H1 (cell line): ENCODE measurements at regions of chr7 and their contacts with region 1.

Region 1: GRCh38 chr7:45136106-45137060 is 21.2 kb upstream of the RAMP3 start:
- DNase-seq: no peak
- H3K4me3 ChIP-seq: no peak overlapping the region
- H3K27ac ChIP-seq: no peak overlapping the region
- H3K4me1 ChIP-seq: no peaks in the 10 kb centered on the region
- H3K27me3 ChIP-seq: no peaks in the 10 kb centered on the region
- CTCF ChIP-seq: peak in 2 of 3 experiments; percentile 83 to 93; a peak in 3 of 4 replicates
- EP300 ChIP-seq: no peak
- POLR2A ChIP-seq: no peak
- RAD21 ChIP-seq: peak; percentile 94

Region 2: GRCh38 chr7:44962483-44963251 is 173.7 kb before region 1 on chr7:
- CTCF ChIA-PET with region 1: interaction called, 21 read pairs
- POLR2A ChIA-PET with region 1: no interaction called
- DNase-seq: peak in 1 of 2 experiments; percentile 67
- H3K4me3 ChIP-seq: peak overlapping the region; percentile 20 to 58 (median 38)
- H3K27ac ChIP-seq: no peak overlapping the region
- H3K4me1 ChIP-seq: peaks cover 0 to 11% (median 4%) of the 10 kb centered on the region in 4 experiments; a peak in 4 of 7 replicates
- H3K27me3 ChIP-seq: peaks cover 10 to 40% (median 23%) of the 10 kb centered on the region in 4 experiments; a peak in 6 of 7 replicates
- CTCF ChIP-seq: peak in 1 of 3 experiments; percentile 12; a peak in 1 of 4 replicates
- EP300 ChIP-seq: no peak
- POLR2A ChIP-seq: 0 out of 3 replicates have a peak, but pooled peaks of 1 of the 2 experiments have one; percentile 36
- RAD21 ChIP-seq: peak; percentile 22 to 31; a peak in 2 of 4 replicates

Region 3: DNA sequence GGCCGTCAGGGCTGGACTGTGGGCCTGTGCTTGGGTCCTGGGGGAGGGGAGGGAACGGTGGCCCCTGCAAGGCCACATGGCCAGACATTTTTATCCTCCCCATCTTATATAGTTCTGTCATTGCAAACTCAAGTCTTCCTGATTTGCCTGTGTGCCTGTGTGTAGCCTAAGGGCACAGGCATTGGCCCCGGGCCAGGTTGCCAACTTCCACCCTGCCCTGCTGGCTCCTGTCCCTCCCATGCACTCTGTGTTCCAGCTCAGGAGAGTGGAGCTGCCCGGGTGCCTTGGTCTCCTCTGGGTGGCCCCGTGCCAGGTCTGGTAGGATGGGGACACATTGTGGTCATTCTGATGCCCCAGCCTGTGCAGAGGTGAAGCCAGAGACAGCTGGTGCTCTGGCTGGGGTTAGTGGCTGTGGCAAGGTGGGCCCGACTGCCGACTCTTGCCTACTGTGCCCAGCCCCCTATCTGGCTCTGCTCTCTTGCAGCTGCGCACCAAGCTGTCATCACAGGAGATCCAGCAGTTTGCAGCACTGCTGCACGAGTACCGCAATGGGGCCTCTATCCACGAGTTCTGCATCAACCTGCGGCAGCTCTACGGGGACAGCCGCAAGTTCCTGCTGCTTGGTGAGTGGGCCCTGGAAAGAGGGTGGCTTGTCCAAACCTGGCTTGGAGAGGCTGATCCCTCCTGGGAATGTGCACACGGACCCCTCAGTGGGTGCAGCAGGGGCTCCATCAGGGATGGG is 62.4 kb before region 1 on chr7:
- CTCF ChIA-PET with region 1: interaction called, 11 read pairs
- POLR2A ChIA-PET with region 1: no interaction called
- DNase-seq: no peak
- H3K4me3 ChIP-seq: no peak overlapping the region
- H3K27ac ChIP-seq: no peak overlapping the region
- H3K4me1 ChIP-seq: no peaks in the 10 kb centered on the region; a peak in 1 of 7 replicates
- H3K27me3 ChIP-seq: no peaks in the 10 kb centered on the region
- CTCF ChIP-seq: no peak
- EP300 ChIP-seq: no peak
- POLR2A ChIP-seq: no peak
- RAD21 ChIP-seq: no peak

Region 4: DNA sequence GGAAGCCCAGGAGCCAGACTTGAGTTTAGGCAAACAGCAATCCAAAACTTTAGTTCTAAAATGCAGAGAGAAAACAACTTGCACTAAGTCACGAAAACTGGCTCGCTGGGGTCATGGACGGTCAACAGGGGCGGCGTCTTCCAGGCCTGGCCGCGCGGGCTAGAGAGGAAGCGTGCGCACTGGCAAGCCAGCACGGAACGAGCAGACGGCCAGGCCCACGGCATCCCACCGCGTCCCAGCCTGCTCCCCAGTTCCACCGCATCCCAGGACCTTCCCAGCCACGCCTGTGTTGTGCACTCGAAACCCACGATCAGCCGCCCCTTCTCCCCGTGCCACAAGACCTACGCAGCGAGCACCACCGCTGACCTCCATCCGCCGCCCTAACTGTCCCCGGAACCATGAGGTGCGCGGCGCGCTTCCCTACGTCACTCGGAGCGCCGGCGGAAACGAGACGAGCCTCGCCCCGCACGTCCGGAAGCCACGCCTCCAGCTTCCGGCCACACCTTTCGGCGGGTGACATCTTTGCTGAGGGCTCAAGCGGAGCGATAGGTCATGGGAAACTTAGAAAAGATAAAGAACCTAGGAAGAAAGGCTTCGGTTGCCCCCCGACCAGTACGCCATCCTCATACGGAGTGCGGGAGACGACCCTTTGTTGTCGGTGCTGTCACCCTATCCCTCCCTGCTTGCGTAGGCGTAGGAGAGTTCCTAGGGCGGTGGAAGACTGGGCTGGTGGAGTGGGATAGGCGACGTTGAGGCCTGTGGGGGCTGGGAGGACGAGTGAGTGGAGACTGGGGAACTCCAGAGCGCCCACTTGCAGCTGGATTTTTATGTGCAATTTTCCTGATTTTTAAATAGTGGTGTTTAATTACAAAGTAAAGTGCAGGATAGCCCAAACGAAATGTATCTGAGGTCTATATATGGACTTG is 24.8 kb before region 1 on chr7 and contains the start of gene TBRG4:
- CTCF ChIA-PET with region 1: interaction called, 21 read pairs
- POLR2A ChIA-PET with region 1: interaction called, 13 read pairs
- DNase-seq: peak; percentile 79 to 94
- H3K4me3 ChIP-seq: peak within 1 kb of the TSS; percentile 68 to 93 (median 85)
- H3K27ac ChIP-seq: peak within 1 kb of the TSS; percentile 94
- H3K4me1 ChIP-seq: peaks cover 0 to 3% (median under 1%) of the 10 kb centered on the region in 4 experiments; a peak in 2 of 7 replicates
- H3K27me3 ChIP-seq: peaks cover 0 to 4% (median 1%) of the 10 kb centered on the region in 4 experiments; a peak in 1 of 7 replicates
- CTCF ChIP-seq: peak in 1 of 3 experiments; percentile 7; a peak in 1 of 4 replicates
- EP300 ChIP-seq: no peak
- POLR2A ChIP-seq: peak; percentile 95 to 99
- RAD21 ChIP-seq: peak; percentile 1 to 15; a peak in 1 of 4 replicates
- total RNA-seq, gene TBRG4: 137 and 146 TPM in 2 replicates

Region 5: GRCh38 chr7:45147858-45148830 is 11.8 kb after region 1 on chr7:
- CTCF ChIA-PET with region 1: interaction called, 16 read pairs
- POLR2A ChIA-PET with region 1: no interaction called
- DNase-seq: no peak
- H3K4me3 ChIP-seq: no peak overlapping the region
- H3K27ac ChIP-seq: no peak overlapping the region
- H3K4me1 ChIP-seq: no peaks in the 10 kb centered on the region
- H3K27me3 ChIP-seq: no peaks in the 10 kb centered on the region
- CTCF ChIP-seq: no peak
- EP300 ChIP-seq: no peak
- POLR2A ChIP-seq: no peak
- RAD21 ChIP-seq: no peak